WTC11 (cell line): ENCODE measurements at regions of chr12 and their contacts with region 1.

Region 1: GRCh38 chr12:123436017-123436964 is at the start of gene RILPL2:
- DNase-seq: peak; percentile 79
- ATAC-seq: peak; percentile 93
- H3K4me3 Mint-ChIP-seq: peak within 1 kb of the TSS; percentile 94
- H3K27ac Mint-ChIP-seq: no peak within 1 kb of the TSS
- H3K4me1 Mint-ChIP-seq: no peaks in the 10 kb centered on the region
- H3K27me3 Mint-ChIP-seq: peaks cover 39% of the 10 kb centered on the region
- CTCF ChIP-seq: no peak
- total RNA-seq, gene RILPL2: 1.1 to 1.4 TPM (median 1.2 TPM) in 3 replicates

Region 2: DNA sequence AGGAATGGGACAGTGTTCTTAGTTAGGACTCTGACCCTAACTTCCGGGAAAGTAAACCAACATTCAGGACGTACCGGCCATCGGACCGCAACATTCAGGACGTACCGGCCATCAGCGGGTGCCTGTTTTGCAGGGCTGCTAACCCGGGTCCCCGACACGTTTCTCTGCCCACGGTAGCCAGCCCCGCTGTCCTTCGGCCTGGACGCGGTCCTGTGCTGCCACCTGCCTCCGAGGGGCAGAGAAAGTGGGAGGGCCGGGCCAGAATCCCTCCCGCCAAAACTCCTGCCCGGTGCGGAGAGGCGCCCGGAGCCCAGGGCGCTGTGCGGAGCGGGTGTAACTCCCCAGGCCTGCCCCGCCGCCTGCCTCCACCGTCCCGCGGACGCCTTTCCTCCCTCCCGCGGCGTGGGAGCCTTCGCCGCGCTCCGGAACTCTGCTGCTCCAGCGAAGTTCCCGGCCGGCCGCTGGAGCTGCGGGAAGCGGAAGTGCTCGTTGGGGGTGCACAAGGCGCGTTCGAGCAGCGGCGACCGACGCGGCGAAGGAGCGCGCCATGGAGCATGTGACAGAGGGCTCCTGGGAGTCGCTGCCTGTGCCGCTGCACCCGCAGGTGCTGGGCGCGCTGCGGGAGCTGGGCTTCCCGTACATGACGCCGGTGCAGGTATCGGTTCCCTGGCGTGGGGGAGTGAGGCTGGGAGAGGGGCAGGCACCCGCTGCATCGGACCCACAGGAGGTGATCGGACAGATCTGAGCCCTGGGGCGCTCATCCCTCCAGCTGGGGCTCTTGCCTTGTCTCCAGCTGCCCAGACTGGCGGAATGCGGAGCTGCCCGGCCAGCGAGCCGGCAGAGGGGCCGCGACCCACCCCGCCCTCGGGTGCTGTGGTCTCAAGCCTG is 165.6 kb after region 1 on chr12 and contains the start of gene DDX55:
- CTCF ChIA-PET with region 1: no interaction called
- POLR2A ChIA-PET with region 1: interaction called, 10 read pairs
- DNase-seq: peak; percentile 75
- ATAC-seq: peak; percentile 92
- H3K4me3 Mint-ChIP-seq: peak within 1 kb of the TSS; percentile 83
- H3K27ac Mint-ChIP-seq: peak within 1 kb of the TSS; percentile 79
- H3K4me1 Mint-ChIP-seq: peaks cover 11% of the 10 kb centered on the region
- H3K27me3 Mint-ChIP-seq: no peaks in the 10 kb centered on the region
- CTCF ChIP-seq: no peak
- total RNA-seq, gene DDX55: 35.0 to 45.5 TPM (median 44.2 TPM) in 3 replicates